Activated B cell treated with CpG ODN at 0.5 μM for 24 hours (primary cell): ENCODE measurements at regions of chr6 and their contacts with region 1.

Region 1: GRCh38 chr6:25042036-25042521 is 106.3 kb upstream of the RIPOR2 start:
- DNase-seq: peak; percentile 53
- ATAC-seq: peak; percentile 65
- H3K4me3 Mint-ChIP-seq: peak overlapping the region; percentile 99
- H3K27ac Mint-ChIP-seq: peak overlapping the region; percentile 96
- H3K4me1 Mint-ChIP-seq: peaks cover 87% of the 10 kb centered on the region
- H3K27me3 Mint-ChIP-seq: no peaks in the 10 kb centered on the region
- CTCF ChIP-seq: no peak

Region 2: DNA sequence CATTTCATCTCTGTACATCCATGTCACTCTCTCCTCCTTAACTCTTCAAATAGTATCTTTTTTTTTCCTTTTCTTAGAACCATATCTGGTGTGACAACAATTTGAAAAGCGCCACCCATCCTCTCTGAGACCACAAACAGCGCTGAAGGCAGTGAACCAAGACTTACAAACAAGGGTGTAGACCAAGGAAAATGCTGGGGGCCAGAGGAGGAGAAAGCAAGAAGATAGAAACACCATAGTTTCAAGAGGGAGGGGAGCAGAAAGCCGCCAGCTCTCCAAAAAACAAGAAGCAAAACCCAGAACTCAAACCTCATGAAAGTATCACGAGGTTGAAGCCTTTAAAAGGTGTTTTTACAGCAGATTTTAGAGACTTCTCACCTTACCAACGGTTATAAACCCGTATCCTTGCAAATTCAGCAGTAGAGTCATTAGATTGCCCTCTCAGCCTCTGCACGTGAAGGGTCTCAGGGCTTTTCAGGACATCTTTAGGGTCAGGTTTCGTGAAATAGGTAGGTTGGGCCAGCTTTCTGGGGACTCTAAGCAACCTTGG is 93.0 kb before region 1 on chr6:
- CTCF ChIA-PET with region 1: no interaction called
- POLR2A ChIA-PET with region 1: interaction called, 10 read pairs
- intact Hi-C with region 1: no loop called
- DNase-seq: no peak
- ATAC-seq: peak; percentile 80
- H3K4me3 Mint-ChIP-seq: peak overlapping the region; percentile 65
- H3K27ac Mint-ChIP-seq: peak overlapping the region; percentile 94
- H3K4me1 Mint-ChIP-seq: peaks cover 85% of the 10 kb centered on the region
- H3K27me3 Mint-ChIP-seq: no peaks in the 10 kb centered on the region
- CTCF ChIP-seq: no peak

Region 3: GRCh38 chr6:25027221-25027916 is 14.7 kb before region 1 on chr6:
- CTCF ChIA-PET with region 1: interaction called, 48 read pairs
- POLR2A ChIA-PET with region 1: interaction called, 33 read pairs
- intact Hi-C with region 1: loop called (anchors 1 kb)
- DNase-seq: peak; percentile 59
- ATAC-seq: peak; percentile 90
- H3K4me3 Mint-ChIP-seq: peak overlapping the region; percentile 77
- H3K27ac Mint-ChIP-seq: peak overlapping the region; percentile 83
- H3K4me1 Mint-ChIP-seq: peaks cover 58% of the 10 kb centered on the region
- H3K27me3 Mint-ChIP-seq: no peaks in the 10 kb centered on the region
- CTCF ChIP-seq: no peak

Region 4: DNA sequence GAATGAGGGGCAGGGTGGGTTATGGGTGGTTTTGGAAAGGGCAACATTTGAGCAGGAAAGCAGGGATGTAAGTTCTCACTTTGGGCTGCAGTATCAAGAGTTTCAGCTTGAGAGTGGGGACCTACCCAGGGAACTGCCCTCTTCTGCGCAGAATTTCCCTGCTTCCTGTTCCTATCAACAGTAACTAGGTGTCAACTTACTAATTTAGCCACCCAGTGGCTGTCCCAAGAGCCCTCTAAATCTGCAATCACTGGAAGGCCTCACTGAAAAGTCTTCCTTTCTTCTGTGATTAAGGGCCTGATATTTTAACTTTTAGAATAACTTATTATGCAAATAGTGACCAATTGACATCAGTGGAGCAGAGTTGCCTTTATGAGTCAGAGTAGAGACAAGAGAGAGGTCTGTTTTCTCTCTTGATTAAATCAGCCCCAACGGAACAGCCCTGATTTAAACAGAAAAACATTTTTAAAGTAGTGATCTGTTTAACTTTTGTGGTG is 11.8 kb after region 1 on chr6:
- CTCF ChIA-PET with region 1: interaction called, 23 read pairs
- POLR2A ChIA-PET with region 1: interaction called, 120 read pairs
- intact Hi-C with region 1: loop called (anchors 1 kb)
- DNase-seq: no peak
- ATAC-seq: peak; percentile 76
- H3K4me3 Mint-ChIP-seq: peak overlapping the region; percentile 75
- H3K27ac Mint-ChIP-seq: peak overlapping the region; percentile 96
- H3K4me1 Mint-ChIP-seq: peaks cover 96% of the 10 kb centered on the region
- H3K27me3 Mint-ChIP-seq: no peaks in the 10 kb centered on the region
- CTCF ChIP-seq: no peak

Region 5: DNA sequence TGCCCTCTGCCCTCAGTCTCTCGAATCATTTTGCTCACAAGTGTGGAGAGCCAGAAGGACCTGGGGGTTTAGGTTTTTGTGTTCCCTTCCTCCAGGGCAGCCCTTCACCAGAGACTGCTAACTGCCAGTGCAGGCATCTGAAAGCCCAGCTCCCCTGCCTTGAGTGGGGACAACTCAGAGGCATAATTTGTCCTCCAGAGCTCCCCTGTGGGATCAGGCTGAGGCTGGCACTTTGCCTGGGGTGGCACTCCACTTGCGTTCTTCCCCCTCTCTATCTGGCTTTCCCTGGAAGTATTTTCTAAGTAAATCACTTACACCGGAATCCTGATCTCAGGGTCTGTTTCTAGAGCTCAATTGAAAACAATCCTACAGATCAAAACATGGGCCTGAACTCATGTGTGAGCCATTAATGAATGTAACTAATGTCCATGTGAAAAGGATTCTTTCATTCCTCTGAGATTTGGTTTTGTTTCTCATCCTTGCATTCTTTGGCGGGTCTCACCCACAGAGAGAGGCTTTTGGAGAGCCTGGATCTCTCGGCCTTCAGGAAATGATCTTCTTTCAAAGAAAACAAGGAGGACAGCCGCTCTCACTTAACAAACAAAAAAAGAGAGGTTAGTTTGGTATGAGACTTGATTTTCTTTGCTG is 19.3 kb after region 1 on chr6:
- CTCF ChIA-PET with region 1: interaction called, 3 read pairs
- POLR2A ChIA-PET with region 1: interaction called, 29 read pairs
- intact Hi-C with region 1: loop called (anchors 1 kb)
- DNase-seq: no peak
- ATAC-seq: no peak
- H3K4me3 Mint-ChIP-seq: no peak overlapping the region
- H3K27ac Mint-ChIP-seq: peak overlapping the region; percentile 36
- H3K4me1 Mint-ChIP-seq: peaks cover 32% of the 10 kb centered on the region
- H3K27me3 Mint-ChIP-seq: no peaks in the 10 kb centered on the region
- CTCF ChIP-seq: no peak

Region 6: GRCh38 chr6:25085756-25086155 is 43.7 kb after region 1 on chr6:
- CTCF ChIA-PET with region 1: no interaction called
- POLR2A ChIA-PET with region 1: no interaction called
- intact Hi-C with region 1: no loop called
- DNase-seq: no peak
- ATAC-seq: peak; percentile 56
- H3K4me3 Mint-ChIP-seq: no peak overlapping the region
- H3K27ac Mint-ChIP-seq: no peak overlapping the region
- H3K4me1 Mint-ChIP-seq: peaks cover 10% of the 10 kb centered on the region
- H3K27me3 Mint-ChIP-seq: no peaks in the 10 kb centered on the region
- CTCF ChIP-seq: no peak

Region 7: GRCh38 chr6:25103603-25104002 is 61.5 kb after region 1 on chr6:
- CTCF ChIA-PET with region 1: no interaction called
- POLR2A ChIA-PET with region 1: no interaction called
- intact Hi-C with region 1: no loop called
- DNase-seq: no peak
- ATAC-seq: no peak
- H3K4me3 Mint-ChIP-seq: no peak overlapping the region
- H3K27ac Mint-ChIP-seq: no peak overlapping the region
- H3K4me1 Mint-ChIP-seq: peaks cover 17% of the 10 kb centered on the region
- H3K27me3 Mint-ChIP-seq: no peaks in the 10 kb centered on the region
- CTCF ChIP-seq: no peak

Region 8: DNA sequence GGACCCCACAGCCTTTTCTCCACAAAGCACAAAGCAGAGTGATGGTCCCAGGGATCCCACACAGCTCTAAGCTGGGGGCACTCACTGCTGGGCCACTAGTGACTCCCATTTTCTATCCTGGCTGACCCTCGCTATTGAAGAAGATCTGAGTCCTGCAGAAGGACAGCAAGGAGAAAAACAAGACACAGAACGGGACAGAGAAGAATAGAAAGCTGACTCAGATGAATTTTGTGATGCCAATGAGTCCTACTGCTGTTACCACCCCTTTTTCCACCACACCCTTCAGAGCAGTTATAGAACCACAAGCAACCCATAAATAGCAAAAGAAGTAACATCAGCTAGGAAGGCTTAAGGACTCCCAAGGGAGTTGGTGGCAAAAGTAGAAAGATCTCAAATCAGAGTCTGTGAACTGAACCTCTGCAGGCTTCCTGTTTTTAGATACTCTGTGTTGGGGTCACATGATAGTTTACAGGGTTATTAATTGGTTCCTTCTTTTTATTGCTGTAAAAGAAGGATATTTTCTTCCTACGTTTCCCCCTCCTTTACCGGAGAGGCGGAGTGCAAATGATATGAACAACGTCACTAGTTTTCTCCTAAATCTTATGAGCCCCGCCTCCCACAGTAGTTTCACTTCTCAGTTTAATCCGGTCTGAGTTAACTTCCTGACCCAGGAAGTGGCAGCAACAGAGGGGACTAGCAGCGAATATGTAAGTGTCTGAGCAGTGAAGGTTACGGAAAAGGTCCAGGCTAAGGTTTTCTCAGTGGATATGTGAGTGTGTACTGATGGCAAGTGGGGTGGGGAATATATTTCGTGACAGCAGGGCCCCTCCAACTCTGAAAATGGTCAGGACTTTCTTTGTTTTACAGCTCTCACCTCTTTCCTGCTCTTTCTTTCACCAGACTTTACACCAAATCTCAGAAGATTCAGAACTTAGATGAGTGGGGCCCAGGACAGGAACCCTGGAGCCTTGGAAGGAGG is 920.4 kb after region 1 on chr6 and contains the start of gene TRIM38:
- CTCF ChIA-PET with region 1: no interaction called
- POLR2A ChIA-PET with region 1: no interaction called
- intact Hi-C with region 1: loop called (anchors 5 kb)
- DNase-seq: peak; percentile 30
- ATAC-seq: peak; percentile 82
- H3K4me3 Mint-ChIP-seq: peak within 1 kb of the TSS; percentile 94
- H3K27ac Mint-ChIP-seq: peak within 1 kb of the TSS; percentile 95
- H3K4me1 Mint-ChIP-seq: peaks cover 87% of the 10 kb centered on the region
- H3K27me3 Mint-ChIP-seq: no peaks in the 10 kb centered on the region
- CTCF ChIP-seq: no peak
- total RNA-seq, gene TRIM38: 31.7 and 36.8 TPM in 2 replicates